ENCODE measurements at regions of chr11 and their contacts with region 1.

Region 1: GRCh38 chr11:36509694-36510566 is at the start of gene TRAF6:
- DNase-seq: peak; percentile 84
- H3K4me3 Mint-ChIP-seq: peak within 1 kb of the TSS; percentile 97
- H3K27ac Mint-ChIP-seq: peak within 1 kb of the TSS; percentile 92
- H3K4me1 Mint-ChIP-seq: peaks cover 25% of the 10 kb centered on the region
- H3K27me3 Mint-ChIP-seq: peaks cover 6% of the 10 kb centered on the region
- total RNA-seq, gene TRAF6: 9.0 and 10.2 TPM in 2 replicates

Region 2: DNA sequence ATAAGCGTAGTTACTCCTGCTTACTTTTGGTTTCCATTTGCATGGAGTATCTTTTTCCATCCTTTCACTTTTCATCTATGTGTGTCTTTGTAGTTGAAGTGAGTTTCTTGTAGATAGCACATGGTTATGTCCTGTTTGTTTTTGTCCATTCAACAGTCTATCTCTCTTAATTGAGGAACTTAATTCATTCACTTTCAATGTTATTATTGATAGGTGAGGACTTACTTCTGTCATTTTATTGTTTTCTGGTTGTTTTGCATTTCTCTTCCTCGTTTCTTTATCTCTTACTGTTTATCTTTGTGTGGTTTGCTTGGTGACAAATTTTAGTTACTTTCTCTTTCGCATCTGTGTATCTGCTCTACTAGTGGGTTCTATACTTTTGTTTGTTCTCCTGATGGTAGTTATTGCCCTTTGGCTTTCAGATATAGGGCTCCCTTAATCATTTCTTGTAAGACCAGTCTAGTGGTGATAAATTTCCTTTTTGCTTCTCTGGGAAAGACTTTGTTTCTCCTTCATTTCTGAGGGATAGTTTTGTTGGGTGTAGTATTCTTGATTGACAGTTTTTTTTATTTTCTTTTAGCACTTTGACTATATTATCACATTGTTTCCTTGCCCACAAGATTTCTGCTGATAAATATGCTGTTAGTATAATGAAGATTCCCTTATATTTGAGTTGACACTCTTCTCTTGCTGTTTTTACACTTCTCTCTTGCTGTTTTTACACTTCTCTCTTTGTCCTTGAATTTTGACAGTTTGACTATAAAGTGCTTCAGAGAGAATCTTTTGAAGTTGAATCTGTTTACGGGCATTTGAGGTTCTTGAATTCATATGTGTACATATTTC is 48.9 kb after region 1 on chr11:
- intact Hi-C with region 1: loop called (anchors 5 kb)
- DNase-seq: no peak
- H3K4me3 Mint-ChIP-seq: peak overlapping the region; percentile 60
- H3K27ac Mint-ChIP-seq: peak overlapping the region; percentile 60
- H3K4me1 Mint-ChIP-seq: peaks cover 28% of the 10 kb centered on the region
- H3K27me3 Mint-ChIP-seq: peaks cover 24% of the 10 kb centered on the region

Measured in activated T-helper 2 cell treated with anti-CD3 and anti-CD28 coated beads, Interferon-gamma antibody, Interleukin-2, Interleukin-4, amounts not matched to agents 10 μg/mL and 5 μg/mL and 100 μg/mL, durations not matched to agents 14 hours and 24 hours and 36 hours (primary cell).